Head of caudate nucleus (tissue), 42 donors: ENCODE measurements at regions of chr2 and their contacts with region 1.

Region 1: GRCh38 chr2:109736177-109736827 is 57.8 kb upstream of the RGPD5 start:
- DNase-seq: peak in 41 of 42 donors; percentile 13 to 85 (median 62)

Region 2: GRCh38 chr2:109545828-109546713 is 190.2 kb before region 1 on chr2:
- intact Hi-C with region 1: loop called (anchors 5 kb)
- DNase-seq: peak; percentile 47 to 89 (median 76)

Region 3: DNA sequence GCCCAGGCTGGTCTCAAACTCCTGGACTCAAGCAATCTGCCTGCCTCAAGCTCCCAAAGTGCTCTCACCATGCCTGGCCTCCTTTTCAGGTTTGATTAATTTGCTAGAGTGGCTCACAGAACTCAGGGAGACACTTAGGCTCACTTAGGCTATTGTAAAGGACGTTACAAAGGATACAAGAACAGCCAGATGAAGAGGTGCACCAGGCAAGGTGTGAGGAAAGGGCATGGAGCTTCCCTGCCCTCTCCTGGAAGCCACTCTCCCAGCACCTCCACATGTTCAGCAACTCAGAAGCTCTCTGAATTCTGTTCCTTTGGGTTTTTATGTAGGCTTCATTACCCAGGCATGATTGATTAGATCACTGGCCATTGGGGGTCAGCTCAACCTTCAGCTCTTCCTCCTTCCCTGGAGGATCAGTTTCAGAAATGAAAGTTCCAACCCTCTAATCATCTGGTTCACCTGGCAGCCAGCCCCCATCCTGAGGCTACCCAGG is 20.9 kb before region 1 on chr2:
- intact Hi-C with region 1: no loop called
- DNase-seq: peak in 2 of 42 donors; percentile 11 to 22